CD4-positive, alpha-beta T cell (primary cell): ENCODE measurements at regions of chr14 and their contacts with region 1.

Region 1: GRCh38 chr14:100375963-100376735 is 53.0 kb downstream of the SLC25A47 start:
- DNase-seq: peak; percentile 84 to 96 (median 90)
- ATAC-seq: peak; percentile 84
- H3K4me3 ChIP-seq: peak within 1 kb of the TSS; percentile 98
- H3K4me3 Mint-ChIP-seq: peak within 1 kb of the TSS; percentile 95
- H3K27ac ChIP-seq: peak within 1 kb of the TSS; percentile 65 to 85
- H3K27ac Mint-ChIP-seq: peak within 1 kb of the TSS; percentile 73
- H3K4me1 ChIP-seq: peaks cover 30% of the 10 kb centered on the region
- H3K4me1 Mint-ChIP-seq: peaks cover 40% of the 10 kb centered on the region
- H3K27me3 ChIP-seq: no peaks in the 10 kb centered on the region
- H3K27me3 Mint-ChIP-seq: no peaks in the 10 kb centered on the region
- CTCF ChIP-seq: no peak

Region 2: DNA sequence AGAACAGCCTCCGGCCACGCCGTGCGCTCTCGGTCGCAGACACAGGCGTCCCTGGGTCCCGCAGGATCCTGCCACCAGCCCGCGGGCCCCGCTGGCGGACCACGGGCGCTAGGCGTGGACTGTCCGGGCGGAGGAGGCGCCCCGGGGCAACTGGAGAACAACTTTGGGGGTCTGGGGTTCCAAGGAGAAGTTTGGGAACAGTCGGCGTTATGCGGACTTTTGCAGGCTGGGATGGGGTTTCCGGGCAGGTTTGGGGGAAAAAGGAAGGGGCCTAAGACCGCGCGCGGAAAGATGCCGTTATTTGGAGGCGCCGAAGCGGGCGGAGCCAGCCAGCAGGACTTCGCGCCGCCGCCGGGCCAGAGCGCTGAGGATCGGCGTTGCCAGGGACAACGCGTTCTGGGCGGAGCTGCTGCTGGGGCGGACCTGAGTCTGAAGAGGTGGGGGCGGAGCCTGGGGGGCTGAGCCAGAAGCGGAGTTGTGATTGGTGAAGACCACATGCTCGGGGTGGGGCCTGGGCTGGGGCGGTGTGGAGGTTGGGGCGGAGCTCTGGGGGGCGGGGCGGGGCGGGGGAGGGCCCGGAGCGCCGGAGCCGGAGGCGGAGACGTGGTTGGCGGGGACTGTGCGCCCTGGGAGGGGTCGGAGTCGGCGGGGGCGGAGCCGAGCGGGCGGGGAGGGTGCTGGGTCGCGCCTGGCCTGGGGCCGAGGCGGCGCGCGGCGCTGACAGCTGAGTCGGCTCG is 692.4 kb before region 1 on chr14 and contains the start of gene CYP46A1:
- CTCF ChIA-PET with region 1: no interaction called
- POLR2A ChIA-PET with region 1: no interaction called
- intact Hi-C with region 1: loop called in 1 of 2 experiments (anchors 5 kb)
- DNase-seq: peak; percentile 99 to 100 (median 100)
- ATAC-seq: peak; percentile 94
- H3K4me3 ChIP-seq: peak within 1 kb of the TSS; percentile 64
- H3K4me3 Mint-ChIP-seq: peak within 1 kb of the TSS; percentile 95
- H3K27ac ChIP-seq: peak within 1 kb of the TSS; percentile 46 to 50
- H3K27ac Mint-ChIP-seq: peak within 1 kb of the TSS; percentile 55
- H3K4me1 ChIP-seq: peaks cover 31% of the 10 kb centered on the region
- H3K4me1 Mint-ChIP-seq: peaks cover 12% of the 10 kb centered on the region
- H3K27me3 ChIP-seq: peaks cover 9 to 14% of the 10 kb centered on the region in 2 experiments
- H3K27me3 Mint-ChIP-seq: peaks cover 18% of the 10 kb centered on the region
- CTCF ChIP-seq: no peak
- total RNA-seq, gene CYP46A1: 0.11 to 0.22 TPM

Region 3: GRCh38 chr14:99946652-99947489 is 429.3 kb before region 1 on chr14:
- CTCF ChIA-PET with region 1: no interaction called
- POLR2A ChIA-PET with region 1: no interaction called
- intact Hi-C with region 1: no loop called
- DNase-seq: peak; percentile 25 to 71 (median 44)
- ATAC-seq: peak; percentile 65
- H3K4me3 ChIP-seq: peak overlapping the region; percentile 37
- H3K4me3 Mint-ChIP-seq: peak overlapping the region; percentile 70
- H3K27ac ChIP-seq: no peak overlapping the region
- H3K27ac Mint-ChIP-seq: no peak overlapping the region
- H3K4me1 ChIP-seq: peaks cover 15% of the 10 kb centered on the region
- H3K4me1 Mint-ChIP-seq: peaks cover 11% of the 10 kb centered on the region
- H3K27me3 ChIP-seq: peaks cover 8 to 15% of the 10 kb centered on the region in 2 experiments
- H3K27me3 Mint-ChIP-seq: peaks cover 32% of the 10 kb centered on the region
- CTCF ChIP-seq: peak; percentile 98

Region 4: GRCh38 chr14:100056964-100057795 is 319.0 kb before region 1 on chr14:
- CTCF ChIA-PET with region 1: no interaction called
- POLR2A ChIA-PET with region 1: no interaction called
- intact Hi-C with region 1: loop called in 1 of 2 experiments (anchors 5 kb)
- DNase-seq: peak in 4 of 14 experiments; percentile 48 to 85 (median 78)
- ATAC-seq: peak; percentile 80
- H3K4me3 ChIP-seq: no peak overlapping the region
- H3K4me3 Mint-ChIP-seq: peak overlapping the region; percentile 8
- H3K27ac ChIP-seq: peak overlapping the region in 1 of 2 donors; percentile 39
- H3K27ac Mint-ChIP-seq: peak overlapping the region; percentile 78
- H3K4me1 ChIP-seq: peaks cover 48% of the 10 kb centered on the region
- H3K4me1 Mint-ChIP-seq: peaks cover 51% of the 10 kb centered on the region
- H3K27me3 ChIP-seq: no peaks in the 10 kb centered on the region
- H3K27me3 Mint-ChIP-seq: no peaks in the 10 kb centered on the region
- CTCF ChIP-seq: peak; percentile 81

Region 5: GRCh38 chr14:100192672-100193416 is 183.3 kb before region 1 on chr14:
- CTCF ChIA-PET with region 1: interaction called, 4 read pairs
- POLR2A ChIA-PET with region 1: interaction called, 3 read pairs
- intact Hi-C with region 1: loop called in 1 of 2 experiments (anchors 5 kb)
- DNase-seq: peak; percentile 99 to 100 (median 100)
- ATAC-seq: peak; percentile 99
- H3K4me3 ChIP-seq: peak overlapping the region; percentile 60
- H3K4me3 Mint-ChIP-seq: peak overlapping the region; percentile 54
- H3K27ac ChIP-seq: peak overlapping the region; percentile 33 to 84
- H3K27ac Mint-ChIP-seq: peak overlapping the region; percentile 86
- H3K4me1 ChIP-seq: peaks cover 21% of the 10 kb centered on the region
- H3K4me1 Mint-ChIP-seq: peaks cover 9% of the 10 kb centered on the region
- H3K27me3 ChIP-seq: no peaks in the 10 kb centered on the region
- H3K27me3 Mint-ChIP-seq: no peaks in the 10 kb centered on the region
- CTCF ChIP-seq: peak; percentile 93

Region 6: GRCh38 chr14:100239840-100240724 is 136.1 kb before region 1 on chr14:
- CTCF ChIA-PET with region 1: interaction called, 5 read pairs
- POLR2A ChIA-PET with region 1: no interaction called
- intact Hi-C with region 1: loop called in 1 of 2 experiments (anchors 1 kb)
- DNase-seq: peak; percentile 65 to 95 (median 84)
- ATAC-seq: peak; percentile 47
- H3K4me3 ChIP-seq: peak overlapping the region; percentile 78
- H3K4me3 Mint-ChIP-seq: peak overlapping the region; percentile 97
- H3K27ac ChIP-seq: peak overlapping the region; percentile 82 to 86
- H3K27ac Mint-ChIP-seq: peak overlapping the region; percentile 98
- H3K4me1 ChIP-seq: peaks cover 54% of the 10 kb centered on the region
- H3K4me1 Mint-ChIP-seq: peaks cover 63% of the 10 kb centered on the region
- H3K27me3 ChIP-seq: no peaks in the 10 kb centered on the region
- H3K27me3 Mint-ChIP-seq: no peaks in the 10 kb centered on the region
- CTCF ChIP-seq: peak; percentile 30

Region 7: DNA sequence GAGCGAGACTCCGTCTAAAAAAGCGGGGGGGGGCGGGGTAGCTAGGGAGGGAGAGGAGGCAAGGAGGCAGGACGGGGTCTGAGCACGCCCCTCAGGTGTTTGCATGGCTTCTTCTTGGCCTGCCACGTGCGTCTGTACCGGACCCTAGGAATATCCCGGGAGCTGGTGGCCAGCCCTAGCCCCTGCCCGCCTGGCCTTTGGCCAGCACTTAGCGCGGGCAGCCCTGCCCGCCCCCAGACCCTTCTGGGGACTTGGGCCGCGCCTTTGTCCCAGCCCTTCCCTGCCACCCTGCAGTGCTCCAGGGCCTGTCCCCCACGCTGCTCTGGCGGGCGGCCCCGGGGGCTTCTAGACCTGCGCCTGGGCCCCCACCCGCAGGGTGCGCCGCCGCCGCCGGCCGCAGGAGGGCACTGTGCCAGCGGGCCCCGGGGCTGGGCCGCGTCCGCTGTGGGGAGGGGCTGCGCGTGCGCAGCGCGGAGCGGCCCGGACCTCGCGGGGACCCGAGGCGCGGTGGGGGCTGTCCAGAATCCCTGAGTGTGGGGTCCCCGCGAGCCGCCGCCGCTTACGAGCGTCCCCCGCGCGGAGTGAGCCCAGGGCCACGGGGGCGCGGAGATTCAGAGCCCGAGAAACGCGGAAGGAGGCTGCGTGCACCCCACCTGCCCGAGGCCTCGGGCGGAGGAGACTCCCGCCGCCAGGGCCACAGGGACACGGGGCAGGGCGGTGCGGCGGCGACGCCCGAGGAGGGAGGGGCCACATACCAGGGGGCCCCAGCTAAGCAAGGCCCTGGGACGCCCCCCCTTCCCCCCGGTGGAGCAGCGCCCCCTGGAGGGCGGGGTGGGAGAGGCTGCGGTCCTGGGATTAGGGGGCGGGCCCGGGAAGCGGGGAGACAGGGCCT is 90.9 kb before region 1 on chr14:
- CTCF ChIA-PET with region 1: interaction called, 9 read pairs
- POLR2A ChIA-PET with region 1: no interaction called
- intact Hi-C with region 1: loop called (anchors 2 to 5 kb)
- DNase-seq: peak; percentile 60 to 91 (median 76)
- ATAC-seq: peak; percentile 92
- H3K4me3 ChIP-seq: peak overlapping the region; percentile 59
- H3K4me3 Mint-ChIP-seq: peak overlapping the region; percentile 80
- H3K27ac ChIP-seq: peak overlapping the region in 1 of 2 donors; percentile 79
- H3K27ac Mint-ChIP-seq: peak overlapping the region; percentile 42
- H3K4me1 ChIP-seq: peaks cover 15% of the 10 kb centered on the region
- H3K4me1 Mint-ChIP-seq: no peaks in the 10 kb centered on the region
- H3K27me3 ChIP-seq: no peaks in the 10 kb centered on the region
- H3K27me3 Mint-ChIP-seq: no peaks in the 10 kb centered on the region
- CTCF ChIP-seq: peak; percentile 96

Region 8: GRCh38 chr14:101761032-101761880 is 1385.1 kb after region 1 on chr14 and contains the start of gene PPP2R5C:
- CTCF ChIA-PET with region 1: no interaction called
- POLR2A ChIA-PET with region 1: no interaction called
- intact Hi-C with region 1: loop called in 1 of 2 experiments (anchors 5 kb)
- DNase-seq: peak; percentile 78 to 94 (median 86)
- ATAC-seq: peak; percentile 60
- H3K4me3 ChIP-seq: peak within 1 kb of the TSS; percentile 97
- H3K4me3 Mint-ChIP-seq: peak within 1 kb of the TSS; percentile 97
- H3K27ac ChIP-seq: peak within 1 kb of the TSS; percentile 79
- H3K27ac Mint-ChIP-seq: peak within 1 kb of the TSS; percentile 91
- H3K4me1 ChIP-seq: peaks cover 30% of the 10 kb centered on the region
- H3K4me1 Mint-ChIP-seq: peaks cover 43% of the 10 kb centered on the region
- H3K27me3 ChIP-seq: no peaks in the 10 kb centered on the region
- H3K27me3 Mint-ChIP-seq: no peaks in the 10 kb centered on the region
- CTCF ChIP-seq: no peak
- total RNA-seq, gene PPP2R5C: 463 to 487 TPM